ENCODE measurements at regions of chr17 and their contacts with region 1.

Region 1: GRCh38 chr17:17982799-17983198 is 10.1 kb downstream of the DRC3 start:
- DNase-seq: no peak
- ATAC-seq: no peak
- H3K4me3 ChIP-seq: no peak overlapping the region
- H3K27ac ChIP-seq: no peak overlapping the region
- H3K4me1 ChIP-seq: peaks cover 5% of the 10 kb centered on the region
- H3K27me3 ChIP-seq: no peaks in the 10 kb centered on the region
- CTCF ChIP-seq: no peak

Region 2: DNA sequence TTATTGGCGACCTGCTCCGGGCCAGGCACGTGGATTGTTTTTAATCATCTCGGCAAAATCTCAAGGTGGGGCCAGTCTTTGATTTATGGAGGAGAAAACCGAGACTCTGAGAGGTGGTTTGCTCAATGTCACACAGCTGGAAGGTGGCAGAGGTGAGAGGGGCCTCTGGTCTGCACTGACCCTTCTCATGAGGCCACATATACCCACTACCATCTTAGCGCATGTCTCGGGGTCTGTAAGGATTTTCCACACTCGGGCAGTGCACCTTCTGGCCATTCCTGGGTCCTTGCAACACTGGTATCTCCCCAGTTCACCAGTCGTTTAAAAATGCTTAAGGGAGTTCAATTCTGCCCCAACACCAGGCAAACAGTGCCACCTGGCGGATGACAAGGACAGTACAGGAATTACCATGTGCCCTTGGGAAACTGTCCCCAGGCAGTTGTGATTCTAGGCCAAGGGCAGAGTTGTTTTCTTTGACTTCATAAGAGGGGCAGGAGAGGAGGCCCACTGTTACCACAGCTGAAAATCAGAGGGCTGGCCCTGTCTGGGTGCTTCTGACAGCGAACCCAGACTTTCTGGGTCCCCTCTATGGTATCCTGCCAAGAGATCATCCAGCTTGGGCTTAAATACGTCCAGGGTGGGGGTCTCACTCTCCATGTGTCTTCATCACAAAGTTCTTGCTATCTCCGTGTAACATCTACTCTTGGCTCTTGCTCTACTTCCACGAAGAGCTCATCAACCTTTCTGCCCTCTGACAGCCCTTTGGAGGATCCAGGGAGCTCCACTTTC is 341.0 kb before region 1 on chr17:
- CTCF ChIA-PET with region 1: no interaction called
- POLR2A ChIA-PET with region 1: no interaction called
- in situ Hi-C with region 1: no loop called
- intact Hi-C with region 1: no loop called
- DNase-seq: peak; percentile 52
- ATAC-seq: peak; percentile 93
- H3K4me3 ChIP-seq: no peak overlapping the region
- H3K27ac ChIP-seq: no peak overlapping the region
- H3K4me1 ChIP-seq: no peaks in the 10 kb centered on the region
- H3K27me3 ChIP-seq: no peaks in the 10 kb centered on the region
- CTCF ChIP-seq: peak; percentile 87

Region 3: GRCh38 chr17:18014006-18014405 is 31.2 kb after region 1 on chr17:
- CTCF ChIA-PET with region 1: no interaction called
- POLR2A ChIA-PET with region 1: interaction called, 11 read pairs
- in situ Hi-C with region 1: no loop called
- intact Hi-C with region 1: no loop called
- DNase-seq: no peak
- ATAC-seq: no peak
- H3K4me3 ChIP-seq: no peak overlapping the region
- H3K27ac ChIP-seq: no peak overlapping the region
- H3K4me1 ChIP-seq: no peaks in the 10 kb centered on the region
- H3K27me3 ChIP-seq: no peaks in the 10 kb centered on the region
- CTCF ChIP-seq: no peak

Measured in Panc1 (cell line).